ENCODE measurements at regions of chr3 and their contacts with region 1.

Region 1: GRCh38 chr3:153595186-153595815 is 433.3 kb downstream of the RAP2B start:
- DNase-seq: no peak
- H3K4me3 ChIP-seq: no peak overlapping the region
- H3K27ac ChIP-seq: no peak overlapping the region
- H3K4me1 ChIP-seq: peaks cover 0 to 5% (median 2%) of the 10 kb centered on the region in 4 donors
- H3K27me3 ChIP-seq: no peaks in the 10 kb centered on the region
- CTCF ChIP-seq: peak; percentile 58 to 67 (median 58)
- EP300 ChIP-seq: no peak
- POLR2A ChIP-seq: no peak

Region 2: GRCh38 chr3:153026026-153026425 is 569.3 kb before region 1 on chr3:
- intact Hi-C with region 1: loop called (anchors 2 kb)
- DNase-seq: no peak
- H3K4me3 ChIP-seq: no peak overlapping the region
- H3K27ac ChIP-seq: no peak overlapping the region
- H3K4me1 ChIP-seq: peaks cover 0 to 27% (median 25%) of the 10 kb centered on the region in 4 donors
- H3K27me3 ChIP-seq: no peaks in the 10 kb centered on the region
- CTCF ChIP-seq: peak; percentile 65 to 70 (median 69)
- EP300 ChIP-seq: no peak
- POLR2A ChIP-seq: no peak

Measured in esophagus muscularis mucosa (tissue), 4 donors.